GM23248 (cell line): ENCODE measurements at regions of chr2 and their contacts with region 1.

Region 1: GRCh38 chr2:39160982-39161381 is 40.1 kb upstream of the SOS1 start:
- DNase-seq: peak; percentile 36
- H3K4me3 ChIP-seq: no peak overlapping the region
- H3K27ac ChIP-seq: no peak overlapping the region
- H3K4me1 ChIP-seq: no peaks in the 10 kb centered on the region
- H3K27me3 ChIP-seq: no peaks in the 10 kb centered on the region

Region 2: GRCh38 chr2:39210846-39211245 is 49.9 kb after region 1 on chr2:
- in situ Hi-C with region 1: loop called (anchors 5 kb)
- DNase-seq: no peak
- H3K4me3 ChIP-seq: no peak overlapping the region
- H3K27ac ChIP-seq: no peak overlapping the region
- H3K4me1 ChIP-seq: no peaks in the 10 kb centered on the region
- H3K27me3 ChIP-seq: no peaks in the 10 kb centered on the region